ENCODE measurements at regions of chr15 and their contacts with region 1.

Region 1: GRCh38 chr15:40763801-40764732 is at the start of gene GCHFR:
- DNase-seq: peak; percentile 78
- H3K4me3 Mint-ChIP-seq: peak within 1 kb of the TSS; percentile 68
- H3K27ac Mint-ChIP-seq: peak within 1 kb of the TSS; percentile 88
- H3K4me1 Mint-ChIP-seq: peaks cover 25% of the 10 kb centered on the region
- H3K27me3 Mint-ChIP-seq: no peaks in the 10 kb centered on the region
- CTCF ChIP-seq: no peak
- total RNA-seq, gene GCHFR: 7.2 and 8.2 TPM in 2 replicates

Region 2: DNA sequence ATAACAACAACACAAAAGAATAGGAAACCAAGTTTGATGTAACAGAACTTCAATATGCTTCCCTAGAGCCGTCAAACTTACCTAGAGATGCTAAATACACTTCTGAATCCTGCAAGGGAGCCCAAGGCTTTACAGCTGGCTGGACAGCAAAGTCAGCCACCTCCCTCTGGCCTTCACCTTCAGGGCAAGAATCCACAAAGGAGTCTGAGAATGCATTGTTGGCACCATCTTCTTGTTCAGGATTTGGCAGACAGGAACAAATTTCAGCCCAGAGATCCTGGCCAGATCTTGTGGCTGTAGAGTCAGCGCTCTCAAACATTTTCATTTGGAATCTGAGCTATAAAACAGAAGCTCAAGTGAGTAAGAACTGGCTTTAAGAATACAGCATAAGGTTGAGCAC is 201.4 kb before region 1 on chr15:
- CTCF ChIA-PET with region 1: no interaction called
- POLR2A ChIA-PET with region 1: no interaction called
- intact Hi-C with region 1: no loop called
- DNase-seq: no peak
- H3K4me3 Mint-ChIP-seq: no peak overlapping the region
- H3K27ac Mint-ChIP-seq: no peak overlapping the region
- H3K4me1 Mint-ChIP-seq: peaks cover 19% of the 10 kb centered on the region
- H3K27me3 Mint-ChIP-seq: no peaks in the 10 kb centered on the region
- CTCF ChIP-seq: no peak

Region 3: GRCh38 chr15:40593588-40594428 is 170.3 kb before region 1 on chr15 and contains the start of gene KNL1:
- CTCF ChIA-PET with region 1: interaction called, 3 read pairs
- POLR2A ChIA-PET with region 1: interaction called, 3 read pairs
- intact Hi-C with region 1: loop called (anchors 10 kb)
- DNase-seq: peak; percentile 95
- H3K4me3 Mint-ChIP-seq: peak within 1 kb of the TSS; percentile 89
- H3K27ac Mint-ChIP-seq: peak within 1 kb of the TSS; percentile 100
- H3K4me1 Mint-ChIP-seq: peaks cover 11% of the 10 kb centered on the region
- H3K27me3 Mint-ChIP-seq: no peaks in the 10 kb centered on the region
- CTCF ChIP-seq: no peak
- total RNA-seq, gene KNL1: 7.9 and 11.4 TPM in 2 replicates

Measured in MCF 10A (cell line).